BJ (cell line): ENCODE measurements at regions of chr17 and their contacts with region 1.

Region 1: DNA sequence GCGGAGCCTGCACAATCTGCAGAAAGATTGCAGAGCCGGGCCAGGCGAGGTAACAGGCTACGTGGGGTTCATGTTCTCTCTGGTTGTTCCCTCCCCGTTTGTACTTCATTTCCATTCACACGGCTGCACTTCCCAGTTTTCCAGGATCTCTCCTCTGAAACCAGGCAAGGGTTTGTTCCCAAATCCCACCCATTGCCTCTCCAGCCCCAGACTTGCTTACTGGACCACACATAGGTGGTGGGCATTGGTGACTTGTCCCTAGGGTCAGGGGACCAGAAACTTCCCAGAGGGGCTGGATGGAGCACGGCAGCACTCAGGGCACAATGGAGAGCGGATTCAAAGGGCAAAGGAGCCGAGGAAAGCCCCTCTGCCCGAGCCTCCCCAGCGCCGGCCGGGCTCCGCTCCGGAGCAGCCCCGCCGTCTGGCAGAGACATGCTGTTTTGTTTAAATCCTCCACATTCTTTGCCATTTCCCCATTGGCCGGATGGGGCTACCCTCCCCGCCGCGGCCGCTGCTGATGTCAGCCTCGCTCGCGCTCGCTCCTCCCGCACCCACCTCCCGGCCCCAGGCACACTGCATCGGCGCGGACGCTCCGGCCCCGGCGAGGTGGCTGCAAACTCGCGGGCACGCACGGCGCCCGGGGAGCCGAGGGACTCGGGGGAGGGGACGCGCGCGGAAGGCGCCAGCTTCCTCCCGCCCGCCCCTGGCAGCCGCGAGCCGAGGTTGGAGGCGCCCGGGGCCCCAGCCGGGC is at the start of gene PITPNC1:
- DNase-seq: peak; percentile 46
- H3K4me3 ChIP-seq: peak within 1 kb of the TSS; percentile 88
- H3K27me3 ChIP-seq: no peaks in the 10 kb centered on the region
- CTCF ChIP-seq: 0 out of 2 replicates have a peak, but pooled peaks have one; percentile 2
- polyA plus RNA-seq, gene PITPNC1: 4.6 and 5.5 TPM in 2 replicates

Region 2: DNA sequence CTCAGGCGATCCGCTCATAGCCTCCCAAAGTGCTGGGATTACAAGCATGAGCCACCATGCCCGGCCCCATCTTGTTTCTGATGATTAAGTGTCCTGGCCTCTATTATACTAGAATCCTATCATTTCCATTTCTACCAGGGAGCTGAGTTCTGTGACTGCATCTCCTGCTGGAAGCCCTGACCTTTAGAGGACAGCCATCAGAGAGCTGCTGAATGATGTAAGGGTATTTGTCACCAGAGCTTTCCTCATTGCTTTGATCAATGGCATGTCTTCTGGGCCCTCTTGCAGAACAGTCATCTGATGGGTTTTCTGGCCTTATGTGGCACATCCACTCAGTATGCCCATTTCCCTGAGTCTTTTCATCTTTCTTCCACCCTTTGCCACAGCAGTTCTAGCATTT is 50.5 kb before region 1 on chr17:
- CTCF ChIA-PET with region 1: no interaction called
- POLR2A ChIA-PET with region 1: no interaction called
- DNase-seq: no peak
- H3K4me3 ChIP-seq: no peak overlapping the region
- H3K27me3 ChIP-seq: no peaks in the 10 kb centered on the region
- CTCF ChIP-seq: no peak

Region 3: GRCh38 chr17:67366193-67367157 is 10.4 kb before region 1 on chr17 and contains the start of gene PSMD12:
- CTCF ChIA-PET with region 1: interaction called, 17 read pairs
- POLR2A ChIA-PET with region 1: no interaction called
- DNase-seq: peak; percentile 28
- H3K4me3 ChIP-seq: peak within 1 kb of the TSS; percentile 93
- H3K27me3 ChIP-seq: no peaks in the 10 kb centered on the region
- CTCF ChIP-seq: no peak
- polyA plus RNA-seq, gene PSMD12: 12.8 and 25.8 TPM in 2 replicates

Region 4: DNA sequence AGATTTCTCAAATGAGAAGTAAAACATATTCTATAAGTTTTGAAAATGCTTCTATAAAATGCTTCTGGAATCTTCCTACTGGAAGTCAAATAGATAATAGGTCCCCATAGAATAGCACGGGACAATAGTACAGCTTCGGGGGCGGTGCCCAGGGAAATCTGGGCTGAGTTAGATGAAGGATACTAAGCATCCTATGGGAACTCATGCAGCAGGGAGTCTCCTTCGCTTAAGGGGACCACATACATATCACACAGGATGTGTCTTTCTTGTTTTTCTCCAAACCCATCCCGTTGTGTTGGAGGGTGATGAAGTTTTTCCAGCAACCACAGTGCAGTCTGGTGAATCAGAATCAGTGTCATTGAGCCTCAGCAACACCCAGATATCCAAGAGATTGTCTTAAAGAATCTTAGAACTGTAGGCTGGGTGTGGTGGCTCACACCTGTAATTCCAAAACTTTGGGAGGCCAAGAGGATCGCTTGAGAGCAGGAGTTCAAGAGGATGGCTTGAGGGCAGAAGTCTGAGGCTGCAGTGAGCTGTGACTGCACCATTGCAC is 84.4 kb after region 1 on chr17:
- CTCF ChIA-PET with region 1: interaction called, 13 read pairs
- POLR2A ChIA-PET with region 1: no interaction called
- DNase-seq: no peak
- H3K4me3 ChIP-seq: no peak overlapping the region
- H3K27me3 ChIP-seq: no peaks in the 10 kb centered on the region
- CTCF ChIP-seq: no peak

Region 5: DNA sequence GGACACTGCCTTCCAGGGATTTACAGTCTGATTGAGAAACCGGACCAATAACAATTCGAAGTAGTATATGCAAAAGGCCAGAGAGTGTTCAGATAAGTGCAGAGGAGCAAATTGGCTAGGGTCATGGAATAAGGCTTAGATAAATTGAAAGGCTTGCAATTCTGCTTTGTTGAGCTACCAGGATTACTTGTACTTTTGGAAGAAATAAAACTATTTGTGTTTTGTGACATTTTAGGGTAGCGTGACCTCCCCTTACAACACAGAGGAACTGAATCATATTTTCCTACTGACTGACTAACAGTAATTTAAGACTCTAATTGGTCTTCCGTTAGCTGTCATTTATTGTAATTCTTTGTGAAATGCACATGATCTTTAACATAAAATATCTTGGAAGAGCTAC is 104.9 kb after region 1 on chr17:
- CTCF ChIA-PET with region 1: interaction called, 58 read pairs
- POLR2A ChIA-PET with region 1: no interaction called
- DNase-seq: no peak
- H3K4me3 ChIP-seq: no peak overlapping the region
- H3K27me3 ChIP-seq: no peaks in the 10 kb centered on the region
- CTCF ChIP-seq: no peak

Region 6: DNA sequence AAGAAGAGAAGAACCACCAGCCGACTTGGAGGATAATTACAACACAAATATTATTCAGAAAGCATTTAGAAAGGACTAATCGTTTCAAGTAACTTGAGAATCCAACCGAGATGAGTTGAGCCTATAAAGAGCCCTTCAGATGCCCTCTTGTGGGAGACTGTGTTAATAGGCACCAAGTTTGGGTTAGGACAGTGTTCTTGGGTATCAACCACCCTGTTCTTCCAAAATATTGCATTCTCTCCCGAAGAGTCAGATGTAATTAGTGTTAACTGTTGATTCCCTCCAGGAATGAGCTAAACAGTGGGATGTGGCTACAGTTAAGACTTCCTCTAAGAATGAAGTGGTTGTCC is 253.0 kb after region 1 on chr17:
- CTCF ChIA-PET with region 1: interaction called, 22 read pairs
- POLR2A ChIA-PET with region 1: interaction called, 3 read pairs
- DNase-seq: peak; percentile 17
- H3K4me3 ChIP-seq: no peak overlapping the region
- H3K27me3 ChIP-seq: no peaks in the 10 kb centered on the region
- CTCF ChIP-seq: peak; percentile 66

Region 7: DNA sequence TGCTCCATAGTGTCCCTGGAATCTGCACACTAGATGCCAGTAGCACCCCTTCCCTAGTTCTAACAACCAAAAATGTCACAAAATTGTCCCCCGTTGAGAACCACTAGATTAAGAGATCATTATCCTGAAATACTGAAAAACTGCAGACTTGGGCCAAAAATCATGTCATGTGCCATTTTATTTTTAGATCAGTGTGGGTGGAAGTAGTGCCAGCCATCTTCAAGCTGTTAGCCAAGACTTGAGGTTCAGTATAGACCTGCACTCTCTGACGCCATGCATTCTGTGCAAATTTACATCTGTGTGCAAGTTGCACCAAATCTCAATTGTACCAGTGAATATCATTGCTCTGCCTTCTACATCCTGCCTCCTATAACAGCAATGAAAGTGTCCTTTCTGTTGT is 309.3 kb after region 1 on chr17:
- CTCF ChIA-PET with region 1: interaction called, 33 read pairs
- POLR2A ChIA-PET with region 1: no interaction called
- DNase-seq: no peak
- H3K4me3 ChIP-seq: no peak overlapping the region
- H3K27me3 ChIP-seq: no peaks in the 10 kb centered on the region
- CTCF ChIP-seq: no peak